Endothelial cell of umbilical vein (primary cell): ENCODE measurements at regions of chrX and their contacts with region 1.

Region 1: DNA sequence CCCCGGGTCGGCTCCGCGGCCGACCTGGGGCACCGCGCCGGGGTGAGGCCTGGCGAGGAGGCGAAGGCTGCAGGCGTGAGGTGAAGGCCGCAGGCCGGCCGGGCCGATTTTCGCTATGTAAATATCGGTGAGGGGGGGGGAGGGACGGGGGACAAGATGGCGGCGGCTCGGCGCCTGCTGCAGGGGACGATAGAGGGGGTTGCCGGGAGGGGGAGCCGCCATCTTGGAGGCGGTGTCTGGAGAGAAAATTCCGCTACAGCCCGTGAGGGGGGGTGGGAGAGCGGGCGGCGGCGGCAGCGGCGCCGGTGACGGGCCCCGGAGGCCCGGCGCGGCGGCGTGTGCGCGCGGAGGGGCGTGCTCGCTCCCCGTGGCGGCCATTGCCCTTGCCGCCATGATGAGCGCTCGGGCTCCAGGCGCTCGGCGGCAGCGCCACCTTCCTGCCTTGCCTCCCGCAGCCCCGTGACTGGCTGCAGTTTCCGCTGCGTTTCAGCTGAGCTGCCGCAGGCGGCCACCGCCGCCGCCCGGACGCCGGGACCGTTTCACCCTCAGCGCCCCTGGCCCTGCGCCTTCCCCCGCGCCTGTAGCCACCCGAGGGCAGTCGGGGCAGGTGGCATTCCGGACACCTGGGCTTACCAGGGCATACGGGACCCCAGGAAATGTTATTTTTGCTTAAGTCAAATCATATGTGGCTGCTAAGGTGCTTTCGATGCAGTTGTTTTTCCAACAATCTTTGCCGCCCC is 692 bp downstream of the ZFX start:
- DNase-seq: peak; percentile 68
- H3K4me3 ChIP-seq: peak overlapping the region; percentile 68 to 90 (median 79)
- H3K27ac ChIP-seq: peak overlapping the region; percentile 86
- H3K4me1 ChIP-seq: peaks cover 53% of the 10 kb centered on the region
- H3K27me3 ChIP-seq: no peaks in the 10 kb centered on the region
- CTCF ChIP-seq: peak in 1 of 2 donors; percentile 25
- POLR2A ChIP-seq: no peak

Region 2: GRCh38 chrX:23907498-23908218 is 242.6 kb before region 1 on chrX and contains the starts of genes APOO and CXorf58:
- CTCF ChIA-PET with region 1: no interaction called
- POLR2A ChIA-PET with region 1: no interaction called
- dilution Hi-C with region 1: no loop called
- intact Hi-C with region 1: loop called (anchors 10 kb)
- DNase-seq: peak; percentile 91
- H3K4me3 ChIP-seq: peak within 1 kb of the TSS; percentile 51 to 82 (median 72)
- H3K27ac ChIP-seq: peak within 1 kb of the TSS; percentile 68
- H3K4me1 ChIP-seq: peaks cover 5% of the 10 kb centered on the region
- H3K27me3 ChIP-seq: no peaks in the 10 kb centered on the region
- CTCF ChIP-seq: peak; percentile 71 to 83
- POLR2A ChIP-seq: peak; percentile 39
- total RNA-seq, gene APOO: 20.9 and 24.3 TPM in 2 replicates
- total RNA-seq, gene CXorf58: not detected in 2 replicates

Region 3: DNA sequence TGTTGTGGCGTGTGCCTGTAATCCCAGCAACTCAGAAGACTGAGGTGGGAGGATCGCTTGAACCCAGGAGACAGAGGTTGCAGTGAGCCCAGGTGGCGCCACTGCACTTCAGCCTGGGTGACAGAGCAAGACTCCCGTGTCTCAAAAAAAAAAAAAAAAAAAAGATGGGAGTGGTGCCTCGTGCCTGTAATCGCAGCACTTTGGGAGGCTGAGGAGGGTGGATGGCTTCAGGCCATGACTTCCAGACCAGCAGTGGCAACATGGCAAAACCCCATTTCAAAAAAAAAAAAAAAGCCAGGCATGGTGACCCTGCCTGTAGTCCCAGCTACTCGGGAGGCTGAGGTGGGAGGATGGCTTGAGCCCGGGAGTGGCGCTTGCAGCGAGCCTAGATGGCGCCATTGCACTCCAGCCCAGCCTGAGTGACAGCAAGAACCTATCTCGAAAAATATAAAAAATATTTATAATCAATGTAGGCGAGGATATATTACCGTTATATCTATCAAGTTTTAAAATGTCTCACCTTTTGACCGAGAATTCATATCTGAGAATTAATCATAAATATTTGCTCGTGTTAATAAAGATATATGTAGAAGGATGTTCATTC is 68.5 kb before region 1 on chrX:
- CTCF ChIA-PET with region 1: no interaction called
- POLR2A ChIA-PET with region 1: no interaction called
- dilution Hi-C with region 1: no loop called
- intact Hi-C with region 1: loop called (anchors 2 kb)
- DNase-seq: peak; percentile 66
- H3K4me3 ChIP-seq: no peak overlapping the region
- H3K27ac ChIP-seq: no peak overlapping the region
- H3K4me1 ChIP-seq: no peaks in the 10 kb centered on the region
- H3K27me3 ChIP-seq: no peaks in the 10 kb centered on the region
- CTCF ChIP-seq: peak; percentile 33 to 53
- POLR2A ChIP-seq: no peak